ENCODE measurements at regions of chr6 and their contacts with region 1.

Region 1: GRCh38 chr6:27312146-27312949 is at the start of gene POM121L2:
- DNase-seq: peak; percentile 79
- H3K4me3 Mint-ChIP-seq: peak within 1 kb of the TSS; percentile 72
- H3K27ac Mint-ChIP-seq: no peak within 1 kb of the TSS
- H3K4me1 Mint-ChIP-seq: peaks cover 10% of the 10 kb centered on the region
- H3K27me3 Mint-ChIP-seq: peaks cover 62% of the 10 kb centered on the region
- total RNA-seq, gene POM121L2: not detected

Region 2: DNA sequence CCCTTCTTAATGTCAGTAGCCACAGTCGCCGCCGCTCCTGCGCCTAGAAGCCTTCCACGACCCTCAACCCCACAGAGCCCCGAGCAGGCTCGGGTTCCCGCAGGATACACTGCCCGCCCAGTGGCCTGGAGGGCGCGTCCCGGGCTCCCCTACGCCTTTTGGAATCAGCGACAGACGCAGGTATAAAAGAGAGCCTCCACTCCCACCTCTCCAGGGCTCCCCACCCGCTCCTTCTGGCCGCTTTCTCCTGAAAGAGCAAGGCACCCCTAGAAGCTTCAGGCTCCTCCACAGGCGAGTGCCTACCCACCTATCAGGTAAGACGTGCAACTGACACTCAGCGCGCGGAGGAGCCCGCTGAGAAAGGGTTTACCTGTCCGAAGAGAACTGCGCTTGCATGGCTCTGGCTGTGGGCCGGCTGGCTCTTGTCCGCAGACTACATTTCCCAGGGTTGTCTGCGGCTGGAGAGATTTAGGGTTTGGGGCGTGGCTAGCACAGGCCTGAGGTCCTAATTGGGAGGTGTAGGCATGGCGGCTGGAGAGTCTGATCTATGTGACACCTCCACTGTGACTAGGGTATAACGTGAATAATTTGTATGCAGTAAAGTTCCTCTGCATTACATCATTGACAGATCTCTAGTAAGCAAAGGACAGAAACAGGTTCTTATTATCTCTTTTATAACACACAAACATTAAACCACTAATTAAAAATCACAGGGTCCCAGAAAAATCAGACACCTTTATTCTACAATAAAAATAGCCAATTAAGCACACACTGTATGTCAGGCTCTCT is 62.7 kb after region 1 on chr6:
- CTCF ChIA-PET with region 1: interaction called, 3 read pairs
- intact Hi-C with region 1: loop called (anchors 2 kb)
- DNase-seq: peak; percentile 89
- H3K4me3 Mint-ChIP-seq: peak overlapping the region; percentile 82
- H3K27ac Mint-ChIP-seq: peak overlapping the region; percentile 67
- H3K4me1 Mint-ChIP-seq: peaks cover 18% of the 10 kb centered on the region
- H3K27me3 Mint-ChIP-seq: no peaks in the 10 kb centered on the region

Region 3: DNA sequence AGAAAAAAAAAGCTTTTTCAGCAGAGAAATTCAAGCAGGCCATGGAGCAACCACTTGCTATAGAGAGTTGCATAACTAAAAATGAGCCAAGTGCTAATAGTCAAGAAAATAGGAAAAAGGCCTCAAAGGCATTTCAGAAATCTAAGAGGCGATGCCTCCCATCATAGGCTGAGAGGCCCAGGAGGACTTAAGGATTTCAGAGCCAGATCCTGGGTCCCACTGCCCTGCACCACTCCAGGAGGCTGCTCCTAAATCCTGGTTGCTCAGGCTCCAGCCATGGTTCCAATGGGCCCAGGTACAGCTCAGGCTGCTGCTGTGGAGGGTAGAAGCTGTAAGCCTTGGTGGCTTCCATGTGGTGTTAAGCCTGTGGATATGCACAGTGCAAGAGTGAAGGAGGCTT is 81.7 kb after region 1 on chr6:
- CTCF ChIA-PET with region 1: no interaction called
- intact Hi-C with region 1: no loop called
- DNase-seq: no peak
- H3K4me3 Mint-ChIP-seq: no peak overlapping the region
- H3K27ac Mint-ChIP-seq: no peak overlapping the region
- H3K4me1 Mint-ChIP-seq: peaks cover 6% of the 10 kb centered on the region
- H3K27me3 Mint-ChIP-seq: no peaks in the 10 kb centered on the region

Region 4: DNA sequence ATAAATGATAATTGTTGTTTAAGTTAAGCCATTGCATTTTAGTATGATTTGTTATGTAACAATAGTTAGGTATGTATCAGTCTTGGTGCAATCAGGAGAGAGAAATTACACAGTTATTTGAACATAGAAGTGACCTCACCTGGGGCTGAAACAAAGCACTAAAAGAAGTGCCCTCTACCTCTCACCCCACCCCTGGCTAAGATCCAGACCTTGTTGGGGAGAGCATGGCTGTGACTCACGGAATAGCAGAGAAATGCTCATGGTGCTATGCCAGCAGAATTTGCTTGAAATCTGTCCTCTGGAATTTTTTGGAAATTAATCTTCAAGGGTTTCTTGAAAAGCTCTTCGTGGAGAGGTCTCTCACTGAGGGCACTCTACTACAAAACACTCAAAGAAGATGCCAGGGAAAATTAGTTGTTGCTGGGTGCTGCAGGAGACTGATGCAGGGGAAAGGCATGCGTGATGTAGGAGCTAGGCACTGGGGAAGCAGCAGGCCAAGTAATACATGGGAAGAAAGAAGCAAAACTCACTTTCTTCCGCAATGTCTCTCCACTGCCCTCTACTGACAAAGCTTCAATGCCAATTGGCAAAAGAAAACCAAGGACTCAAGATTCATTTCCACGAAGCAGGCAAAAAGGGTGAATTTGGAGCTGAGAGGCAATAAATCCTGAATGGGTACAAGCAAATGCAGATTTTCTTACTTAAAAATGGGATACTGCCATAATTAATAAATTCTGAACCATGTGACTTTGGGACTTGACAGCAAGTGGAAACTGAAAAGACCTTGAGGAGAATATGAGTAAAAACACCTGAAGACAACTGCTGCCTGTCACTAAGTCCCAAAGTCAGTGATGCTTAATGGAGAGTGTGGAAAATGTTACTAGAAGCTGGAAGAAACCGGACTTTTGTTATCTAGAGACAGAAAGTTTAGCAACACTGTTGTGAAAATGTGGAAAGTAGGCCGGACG is 296.9 kb after region 1 on chr6:
- CTCF ChIA-PET with region 1: interaction called, 4 read pairs
- intact Hi-C with region 1: loop called (anchors 2 kb)
- DNase-seq: peak; percentile 30
- H3K4me3 Mint-ChIP-seq: no peak overlapping the region
- H3K27ac Mint-ChIP-seq: no peak overlapping the region
- H3K4me1 Mint-ChIP-seq: peaks cover 13% of the 10 kb centered on the region
- H3K27me3 Mint-ChIP-seq: peaks cover 51% of the 10 kb centered on the region

Region 5: GRCh38 chr6:28134015-28134414 is 821.7 kb after region 1 on chr6:
- CTCF ChIA-PET with region 1: no interaction called
- intact Hi-C with region 1: no loop called
- DNase-seq: peak; percentile 57
- H3K4me3 Mint-ChIP-seq: peak overlapping the region; percentile 11
- H3K27ac Mint-ChIP-seq: peak overlapping the region; percentile 48
- H3K4me1 Mint-ChIP-seq: peaks cover 65% of the 10 kb centered on the region
- H3K27me3 Mint-ChIP-seq: no peaks in the 10 kb centered on the region

Measured in activated naive CD4-positive, alpha-beta T cell treated with anti-CD3 and anti-CD28 coated beads for 36 hours (primary cell).